ENCODE measurements at regions of chr9 and their contacts with region 1.

Region 1: GRCh38 chr9:95494416-95495371 is 22.1 kb downstream of the PTCH1 start:
- DNase-seq: peak; percentile 80 to 91 (median 88)
- H3K4me3 ChIP-seq: peak overlapping the region; percentile 75
- H3K4me3 Mint-ChIP-seq: peak overlapping the region; percentile 85 to 94 (median 90)
- H3K27ac ChIP-seq: peak overlapping the region; percentile 77
- H3K27ac Mint-ChIP-seq: peak overlapping the region; percentile 92 to 99 (median 97)
- H3K4me1 ChIP-seq: peaks cover 65% of the 10 kb centered on the region
- H3K4me1 Mint-ChIP-seq: peaks cover 73 to 94% (median 88%) of the 10 kb centered on the region in 3 donors
- H3K27me3 ChIP-seq: no peaks in the 10 kb centered on the region
- H3K27me3 Mint-ChIP-seq: peaks cover 0 to 7% of the 10 kb centered on the region in 2 donors

Region 2: DNA sequence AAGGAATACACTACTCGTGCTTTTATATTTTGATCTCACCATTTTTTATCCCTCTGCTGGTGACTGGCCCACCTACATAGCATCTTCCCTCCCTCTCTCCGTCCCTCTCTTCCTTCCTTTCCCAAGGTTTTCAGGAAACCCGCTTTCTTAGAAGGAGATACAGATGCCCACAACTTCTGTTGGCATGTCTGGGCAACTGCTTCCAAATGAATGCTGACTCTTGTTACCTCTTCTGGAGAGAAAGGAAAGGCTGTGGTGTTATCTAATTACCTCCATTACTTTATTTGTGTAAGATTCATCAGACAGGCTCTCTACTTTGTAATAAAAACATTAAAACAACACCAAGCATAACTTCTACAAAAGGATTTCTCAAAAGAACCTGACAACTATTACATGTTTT is 197.4 kb before region 1 on chr9:
- CTCF ChIA-PET with region 1: no interaction called
- POLR2A ChIA-PET with region 1: no interaction called
- DNase-seq: no peak
- H3K4me3 ChIP-seq: no peak overlapping the region
- H3K4me3 Mint-ChIP-seq: no peak overlapping the region
- H3K27ac ChIP-seq: no peak overlapping the region
- H3K27ac Mint-ChIP-seq: peak overlapping the region in 1 of 8 donors; percentile 9
- H3K4me1 ChIP-seq: no peaks in the 10 kb centered on the region
- H3K4me1 Mint-ChIP-seq: no peaks in the 10 kb centered on the region
- H3K27me3 ChIP-seq: no peaks in the 10 kb centered on the region
- H3K27me3 Mint-ChIP-seq: no peaks in the 10 kb centered on the region

Region 3: DNA sequence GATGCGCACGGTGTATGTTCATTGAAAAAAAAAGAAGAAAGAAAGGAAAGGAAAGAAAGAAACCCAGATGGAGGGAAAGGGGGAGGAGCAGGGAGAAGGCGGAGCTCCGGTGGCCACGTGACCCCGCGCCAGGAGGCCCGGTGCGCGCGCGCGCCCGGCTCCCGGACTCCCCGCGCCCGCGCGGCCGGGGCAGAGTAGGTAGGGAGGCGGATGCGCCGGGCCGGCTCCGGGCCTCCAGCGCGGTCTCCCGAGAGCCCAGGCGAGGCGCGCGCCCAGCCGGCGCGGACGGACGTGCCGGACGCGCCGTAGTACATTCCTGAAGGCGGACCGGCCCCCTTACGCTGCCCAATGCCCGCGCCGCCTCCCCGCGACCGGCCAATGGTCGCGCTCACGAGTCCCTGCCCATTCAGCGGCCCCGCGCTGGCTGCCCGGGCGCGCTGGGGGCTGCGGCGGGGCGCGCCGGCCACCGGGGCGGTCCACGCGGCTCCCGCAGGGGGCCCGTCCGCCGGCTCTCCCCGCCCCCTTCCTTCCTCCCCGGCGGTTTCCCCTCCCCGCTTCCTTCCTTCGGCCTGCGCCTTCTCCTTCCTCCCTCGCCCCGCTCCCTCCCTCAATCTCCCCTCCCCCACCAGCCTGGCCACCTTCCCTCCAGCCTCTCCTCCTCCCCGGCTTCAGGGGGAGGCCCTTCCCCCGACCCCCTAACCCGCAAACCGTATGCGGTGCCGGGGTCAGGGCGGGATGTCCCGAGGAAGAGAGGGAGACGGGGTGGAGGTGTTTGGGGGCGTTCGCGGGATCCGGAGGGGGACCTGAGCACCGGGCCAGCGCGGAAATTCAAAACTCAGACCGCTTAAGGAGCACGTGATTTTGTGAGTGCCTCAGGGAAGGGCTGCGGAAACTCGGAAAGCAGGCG is 16.3 kb after region 1 on chr9:
- CTCF ChIA-PET with region 1: interaction called, 14 read pairs
- POLR2A ChIA-PET with region 1: interaction called, 33 read pairs
- DNase-seq: peak; percentile 74 to 88 (median 78)
- H3K4me3 ChIP-seq: peak overlapping the region; percentile 77
- H3K4me3 Mint-ChIP-seq: peak overlapping the region; percentile 93 to 98 (median 96)
- H3K27ac ChIP-seq: peak overlapping the region; percentile 64
- H3K27ac Mint-ChIP-seq: peak overlapping the region; percentile 73 to 94 (median 92)
- H3K4me1 ChIP-seq: peaks cover 29% of the 10 kb centered on the region
- H3K4me1 Mint-ChIP-seq: peaks cover 34 to 64% (median 46%) of the 10 kb centered on the region in 3 donors
- H3K27me3 ChIP-seq: peaks cover 6% of the 10 kb centered on the region
- H3K27me3 Mint-ChIP-seq: peaks cover 13 to 16% of the 10 kb centered on the region in 2 donors

Measured in CD8-positive, alpha-beta memory T cell (primary cell).